B cell (primary cell): ENCODE measurements at regions of chr19 and their contacts with region 1.

Region 1: GRCh38 chr19:46009530-46010510 is 13.0 kb downstream of the PGLYRP1 start:
- DNase-seq: peak; percentile 75
- ATAC-seq: peak; percentile 69
- H3K4me3 ChIP-seq: no peak overlapping the region
- H3K4me3 Mint-ChIP-seq: no peak overlapping the region
- H3K27ac ChIP-seq: no peak overlapping the region
- H3K27ac Mint-ChIP-seq: no peak overlapping the region
- H3K4me1 ChIP-seq: peaks cover 4 to 5% of the 10 kb centered on the region in 2 donors
- H3K4me1 Mint-ChIP-seq: peaks cover 5% of the 10 kb centered on the region
- H3K27me3 ChIP-seq: peaks cover 0 to 10% (median 5%) of the 10 kb centered on the region in 4 experiments
- H3K27me3 Mint-ChIP-seq: peaks cover 9% of the 10 kb centered on the region
- CTCF ChIP-seq: peak; percentile 86

Region 2: GRCh38 chr19:45779231-45780145 is 230.3 kb before region 1 on chr19:
- CTCF ChIA-PET with region 1: no interaction called
- POLR2A ChIA-PET with region 1: interaction called, 10 read pairs
- intact Hi-C with region 1: no loop called
- DNase-seq: peak; percentile 90
- ATAC-seq: peak; percentile 96
- H3K4me3 ChIP-seq: peak overlapping the region in 4 of 5 experiments; percentile 13 to 61 (median 42)
- H3K4me3 Mint-ChIP-seq: peak overlapping the region; percentile 87
- H3K27ac ChIP-seq: no peak overlapping the region
- H3K27ac Mint-ChIP-seq: peak overlapping the region; percentile 46
- H3K4me1 ChIP-seq: peaks cover 17 to 22% of the 10 kb centered on the region in 2 donors
- H3K4me1 Mint-ChIP-seq: peaks cover 19% of the 10 kb centered on the region
- H3K27me3 ChIP-seq: peaks cover 0 to 23% (median 2%) of the 10 kb centered on the region in 4 experiments
- H3K27me3 Mint-ChIP-seq: peaks cover 10% of the 10 kb centered on the region
- CTCF ChIP-seq: peak; percentile 68

Region 3: GRCh38 chr19:45994989-45995714 is 14.7 kb before region 1 on chr19 and contains the start of gene CCDC61:
- CTCF ChIA-PET with region 1: interaction called, 20 read pairs
- POLR2A ChIA-PET with region 1: interaction called, 3 read pairs
- intact Hi-C with region 1: no loop called
- DNase-seq: peak; percentile 99
- ATAC-seq: peak; percentile 93
- H3K4me3 ChIP-seq: peak within 1 kb of the TSS; percentile 71 to 92 (median 78)
- H3K4me3 Mint-ChIP-seq: peak within 1 kb of the TSS; percentile 58
- H3K27ac ChIP-seq: peak within 1 kb of the TSS; percentile 55 to 84
- H3K27ac Mint-ChIP-seq: no peak within 1 kb of the TSS
- H3K4me1 ChIP-seq: peaks cover 19 to 21% of the 10 kb centered on the region in 2 donors
- H3K4me1 Mint-ChIP-seq: peaks cover 27% of the 10 kb centered on the region
- H3K27me3 ChIP-seq: peaks cover 0 to 9% (median 5%) of the 10 kb centered on the region in 4 experiments
- H3K27me3 Mint-ChIP-seq: peaks cover 21% of the 10 kb centered on the region
- CTCF ChIP-seq: no peak
- total RNA-seq, gene CCDC61: 30.1 and 37.0 TPM in 2 replicates

Region 4: DNA sequence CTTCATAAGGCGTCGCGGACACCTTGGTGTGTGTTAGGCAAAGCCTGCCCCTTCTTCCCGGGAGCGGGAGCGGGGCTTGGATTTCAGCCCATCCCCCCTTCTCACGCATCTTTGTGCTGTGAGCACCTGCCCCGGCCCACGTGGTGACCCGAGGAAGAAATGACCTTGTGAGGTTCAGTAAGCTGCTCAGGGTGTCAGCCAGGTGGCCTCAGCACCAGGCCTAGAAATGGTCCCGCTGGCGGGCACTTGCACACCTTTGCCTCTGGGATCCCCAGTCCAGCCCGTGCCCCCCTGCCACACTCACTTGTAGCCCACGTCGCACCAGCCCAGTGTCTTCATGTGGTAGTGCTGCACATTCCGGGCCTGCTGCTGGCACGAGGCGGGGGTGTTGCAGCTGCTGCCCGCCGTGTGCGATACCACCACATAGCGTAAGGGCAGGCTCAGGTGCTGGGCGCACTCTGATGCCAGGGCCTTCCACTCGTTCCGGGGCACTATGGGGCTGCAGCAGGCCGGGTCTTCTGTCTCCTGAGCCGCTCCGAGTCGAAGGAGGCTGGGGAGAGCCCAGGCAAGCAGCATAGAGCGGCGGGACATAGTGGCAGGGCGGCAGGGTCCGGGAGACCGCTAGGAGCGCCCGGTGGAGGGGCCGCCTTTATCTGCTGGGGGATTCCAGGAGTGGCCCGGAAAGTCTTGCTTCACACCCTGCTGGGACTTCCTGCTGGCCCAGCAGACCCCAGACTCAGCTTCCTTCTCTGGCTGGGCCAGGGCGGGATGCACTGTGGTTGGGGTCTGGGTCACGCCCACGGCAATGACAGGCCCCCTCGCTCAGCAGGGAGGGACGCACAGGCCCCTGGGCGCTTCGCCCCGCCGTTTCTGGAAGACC is 12.9 kb after region 1 on chr19 and contains the start of gene PGLYRP1:
- CTCF ChIA-PET with region 1: interaction called, 17 read pairs
- POLR2A ChIA-PET with region 1: no interaction called
- intact Hi-C with region 1: no loop called
- DNase-seq: no peak
- ATAC-seq: no peak
- H3K4me3 ChIP-seq: peak within 1 kb of the TSS in 1 of 5 experiments; percentile 9
- H3K4me3 Mint-ChIP-seq: no peak within 1 kb of the TSS
- H3K27ac ChIP-seq: no peak within 1 kb of the TSS
- H3K27ac Mint-ChIP-seq: no peak within 1 kb of the TSS
- H3K4me1 ChIP-seq: no peaks in the 10 kb centered on the region
- H3K4me1 Mint-ChIP-seq: no peaks in the 10 kb centered on the region
- H3K27me3 ChIP-seq: peaks cover 0 to 22% (median 16%) of the 10 kb centered on the region in 4 experiments
- H3K27me3 Mint-ChIP-seq: peaks cover 26% of the 10 kb centered on the region
- CTCF ChIP-seq: no peak
- total RNA-seq, gene PGLYRP1: not detected in 2 replicates